Activated T-helper 2 cell treated with anti-CD3 and anti-CD28 coated beads, Interferon-gamma antibody, Interleukin-2, Interleukin-4, amounts not matched to agents 10 μg/mL and 5 μg/mL and 100 μg/mL, durations not matched to agents 14 hours and 24 hours and 36 hours (primary cell): ENCODE measurements at regions of chr2 and their contacts with region 1.

Region 1: DNA sequence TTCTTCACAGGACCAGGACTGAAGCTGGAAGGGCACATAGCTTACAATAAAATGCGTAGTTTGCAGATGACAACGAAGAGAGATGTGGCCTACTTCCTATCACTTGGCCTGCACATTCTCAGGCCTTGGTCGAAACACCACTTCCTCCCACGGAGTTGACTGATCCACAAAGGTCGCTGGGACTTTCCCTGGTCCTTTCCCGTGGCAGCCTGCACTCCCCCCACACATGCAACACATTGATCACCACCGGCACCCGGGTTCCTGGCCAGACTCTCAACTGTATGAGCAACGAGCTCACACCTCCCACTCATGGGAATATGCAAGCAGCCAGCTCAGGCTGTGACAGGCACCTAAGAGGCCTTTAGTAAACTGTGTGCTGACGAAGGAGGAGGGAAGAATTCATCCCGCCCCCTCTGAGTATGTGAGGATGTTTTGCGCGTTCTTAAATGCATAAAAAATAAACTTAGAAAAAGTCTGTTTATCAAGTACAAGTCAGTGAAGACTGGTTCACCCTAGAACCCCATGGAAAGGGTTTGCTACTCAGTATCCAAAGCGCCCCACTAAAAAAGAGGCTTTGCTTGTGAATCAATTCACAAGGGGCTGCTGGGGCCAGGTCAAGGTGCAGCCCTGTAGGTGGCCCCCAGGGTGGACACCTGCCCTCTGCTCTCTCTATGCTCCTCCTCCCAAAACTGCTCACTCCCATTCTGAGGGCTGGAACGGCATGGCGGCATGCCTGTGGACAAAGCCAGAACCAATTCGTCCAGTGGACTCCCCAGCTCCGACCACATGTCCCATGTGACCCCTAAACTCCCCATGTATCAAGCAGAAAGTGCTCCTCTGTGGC is 154.3 kb downstream of the EIPR1 start:
- DNase-seq: peak; percentile 58
- H3K4me3 Mint-ChIP-seq: peak overlapping the region; percentile 24
- H3K27ac Mint-ChIP-seq: peak overlapping the region; percentile 99
- H3K4me1 Mint-ChIP-seq: peaks cover 45% of the 10 kb centered on the region
- H3K27me3 Mint-ChIP-seq: no peaks in the 10 kb centered on the region

Region 2: DNA sequence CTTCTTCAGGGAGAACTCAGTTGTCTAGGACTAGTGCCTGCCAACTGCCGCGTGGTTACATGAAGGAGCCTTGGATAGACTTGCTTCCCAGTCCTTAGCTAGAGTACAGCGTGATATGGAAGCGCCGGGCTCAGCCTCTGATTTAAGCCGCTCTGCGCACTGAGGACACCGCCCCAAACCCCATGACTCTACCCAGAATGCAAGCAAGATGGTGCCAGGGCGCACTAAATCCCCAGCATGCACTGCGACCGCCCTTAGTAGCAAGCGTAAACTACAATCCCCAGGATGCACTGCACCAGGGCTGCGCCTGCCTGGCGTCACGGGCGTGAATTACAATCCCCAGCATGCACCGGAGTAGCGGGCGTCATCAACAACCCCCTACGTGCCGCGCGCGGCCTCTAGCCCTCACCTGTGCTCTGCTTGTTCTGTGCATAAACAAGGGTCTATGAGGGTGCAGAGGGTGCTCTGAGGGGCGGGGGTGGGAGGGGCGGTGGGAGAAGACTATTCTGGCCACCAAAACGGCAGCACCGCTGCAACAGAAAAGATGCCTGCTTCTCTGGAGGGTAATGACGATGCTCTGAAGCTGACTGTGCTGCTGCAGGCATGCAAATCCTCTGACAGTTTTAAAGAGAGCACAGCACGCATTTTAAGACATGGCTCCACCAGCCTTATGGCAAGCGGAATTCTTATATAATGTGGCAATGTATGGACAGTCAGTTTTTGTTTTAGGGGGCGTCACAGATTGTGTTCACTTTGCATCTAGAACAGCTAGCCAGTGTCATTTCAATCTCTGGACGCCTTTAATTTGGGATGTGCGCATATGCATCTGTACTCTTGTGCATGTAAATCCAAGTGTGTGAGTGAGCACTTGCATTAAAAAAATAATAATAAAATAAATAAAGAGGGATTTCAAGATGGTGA is 609.8 kb before region 1 on chr2:
- intact Hi-C with region 1: loop called (anchors 1 kb)
- DNase-seq: peak; percentile 87
- H3K4me3 Mint-ChIP-seq: peak overlapping the region; percentile 75
- H3K27ac Mint-ChIP-seq: peak overlapping the region; percentile 73
- H3K4me1 Mint-ChIP-seq: peaks cover 7% of the 10 kb centered on the region
- H3K27me3 Mint-ChIP-seq: peaks cover 14% of the 10 kb centered on the region

Region 3: GRCh38 chr2:2950403-2950952 is 272.8 kb before region 1 on chr2:
- intact Hi-C with region 1: no loop called
- DNase-seq: no peak
- H3K4me3 Mint-ChIP-seq: no peak overlapping the region
- H3K27ac Mint-ChIP-seq: no peak overlapping the region
- H3K4me1 Mint-ChIP-seq: no peaks in the 10 kb centered on the region
- H3K27me3 Mint-ChIP-seq: no peaks in the 10 kb centered on the region

Region 4: GRCh38 chr2:3179208-3179607 is 44.1 kb before region 1 on chr2:
- intact Hi-C with region 1: no loop called
- DNase-seq: no peak
- H3K4me3 Mint-ChIP-seq: no peak overlapping the region
- H3K27ac Mint-ChIP-seq: no peak overlapping the region
- H3K4me1 Mint-ChIP-seq: no peaks in the 10 kb centered on the region
- H3K27me3 Mint-ChIP-seq: no peaks in the 10 kb centered on the region

Region 5: DNA sequence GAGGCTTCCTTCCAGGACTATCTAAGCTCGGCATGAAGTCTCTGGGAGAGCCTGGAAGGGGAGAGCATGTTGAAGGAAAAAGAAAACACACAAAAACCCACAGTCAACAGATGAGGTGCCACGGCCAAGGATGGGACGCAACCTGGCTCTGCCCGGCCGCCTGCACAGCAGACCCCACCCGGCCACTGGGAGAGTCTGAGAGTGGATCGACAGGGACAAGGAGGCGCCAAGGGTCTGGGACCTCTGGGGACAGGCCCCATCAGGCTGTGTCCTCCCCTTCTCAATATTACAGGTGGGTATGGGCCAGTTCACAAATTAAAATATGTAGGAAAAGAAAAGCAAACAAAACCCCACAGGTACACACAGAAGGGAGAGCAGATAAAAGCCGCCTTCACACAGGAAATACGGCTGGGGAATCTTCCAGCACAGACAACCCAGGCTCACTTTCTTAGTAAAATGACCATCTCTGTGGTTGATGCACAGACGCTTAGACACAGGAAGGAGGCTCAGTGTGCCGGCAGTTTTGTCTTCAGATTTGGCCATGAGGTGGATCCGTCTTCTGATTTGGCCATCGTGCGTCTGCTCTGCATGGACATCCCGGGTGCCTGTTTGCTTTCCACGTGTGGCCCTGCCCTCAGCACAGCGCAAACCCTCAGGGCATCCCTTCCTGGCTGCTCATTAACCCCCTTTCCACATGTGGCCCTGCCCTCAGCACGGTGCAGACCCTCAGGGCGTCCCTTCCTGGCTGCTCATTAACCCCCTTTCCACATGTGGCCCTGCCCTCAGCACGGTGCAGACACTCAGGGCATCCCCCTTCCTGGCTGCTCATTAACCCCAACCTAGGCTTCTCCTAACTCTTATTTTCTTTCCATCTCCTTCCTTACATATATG is 15.9 kb after region 1 on chr2:
- intact Hi-C with region 1: loop called (anchors 1 kb)
- DNase-seq: no peak
- H3K4me3 Mint-ChIP-seq: no peak overlapping the region
- H3K27ac Mint-ChIP-seq: no peak overlapping the region
- H3K4me1 Mint-ChIP-seq: peaks cover 31% of the 10 kb centered on the region
- H3K27me3 Mint-ChIP-seq: no peaks in the 10 kb centered on the region

Region 6: DNA sequence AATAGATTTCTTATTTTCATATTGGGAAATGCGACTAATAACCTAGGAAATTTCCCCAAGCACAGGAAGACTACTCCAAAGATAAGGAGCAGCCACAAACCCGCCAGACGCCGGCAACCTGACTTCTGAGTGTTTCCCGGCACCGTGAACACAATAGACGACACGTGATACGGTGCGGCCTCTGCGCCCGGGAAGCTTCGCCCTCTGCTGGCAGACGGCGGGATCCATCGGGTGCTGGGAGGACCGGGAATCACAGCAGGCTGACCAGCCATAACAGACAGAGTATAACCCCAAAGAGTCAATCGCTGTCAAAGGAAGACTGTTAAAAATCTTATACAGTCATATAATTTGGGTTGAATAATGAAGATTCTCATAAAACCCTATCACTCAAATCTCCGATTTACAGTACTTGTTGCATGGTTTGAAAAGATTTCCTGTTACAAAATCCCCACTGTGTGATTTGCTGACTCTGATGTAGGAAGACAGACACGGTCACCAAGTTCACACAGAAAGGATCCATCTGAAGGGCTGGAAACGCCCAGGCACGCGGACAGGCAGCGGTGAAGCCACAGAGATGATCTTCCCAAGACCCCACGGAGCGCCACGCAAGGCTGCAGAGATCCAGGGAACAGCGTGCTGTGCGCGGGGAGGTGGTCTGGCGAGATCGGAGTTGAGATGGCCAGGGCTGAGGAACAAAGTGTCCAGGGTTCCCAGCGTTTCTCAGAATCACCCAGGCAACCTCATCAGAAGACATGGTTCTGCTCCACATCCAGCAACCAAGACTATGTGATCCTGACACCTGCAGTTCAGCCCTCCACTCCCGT is 80.5 kb after region 1 on chr2:
- intact Hi-C with region 1: loop called (anchors 1 kb)
- DNase-seq: peak; percentile 56
- H3K4me3 Mint-ChIP-seq: no peak overlapping the region
- H3K27ac Mint-ChIP-seq: peak overlapping the region; percentile 52
- H3K4me1 Mint-ChIP-seq: peaks cover 9% of the 10 kb centered on the region
- H3K27me3 Mint-ChIP-seq: no peaks in the 10 kb centered on the region

Region 7: GRCh38 chr2:3518496-3519254 is 295.4 kb after region 1 on chr2:
- intact Hi-C with region 1: loop called (anchors 5 kb)
- DNase-seq: peak; percentile 98
- H3K4me3 Mint-ChIP-seq: peak overlapping the region; percentile 91
- H3K27ac Mint-ChIP-seq: peak overlapping the region; percentile 78
- H3K4me1 Mint-ChIP-seq: peaks cover 31% of the 10 kb centered on the region
- H3K27me3 Mint-ChIP-seq: no peaks in the 10 kb centered on the region

Region 8: DNA sequence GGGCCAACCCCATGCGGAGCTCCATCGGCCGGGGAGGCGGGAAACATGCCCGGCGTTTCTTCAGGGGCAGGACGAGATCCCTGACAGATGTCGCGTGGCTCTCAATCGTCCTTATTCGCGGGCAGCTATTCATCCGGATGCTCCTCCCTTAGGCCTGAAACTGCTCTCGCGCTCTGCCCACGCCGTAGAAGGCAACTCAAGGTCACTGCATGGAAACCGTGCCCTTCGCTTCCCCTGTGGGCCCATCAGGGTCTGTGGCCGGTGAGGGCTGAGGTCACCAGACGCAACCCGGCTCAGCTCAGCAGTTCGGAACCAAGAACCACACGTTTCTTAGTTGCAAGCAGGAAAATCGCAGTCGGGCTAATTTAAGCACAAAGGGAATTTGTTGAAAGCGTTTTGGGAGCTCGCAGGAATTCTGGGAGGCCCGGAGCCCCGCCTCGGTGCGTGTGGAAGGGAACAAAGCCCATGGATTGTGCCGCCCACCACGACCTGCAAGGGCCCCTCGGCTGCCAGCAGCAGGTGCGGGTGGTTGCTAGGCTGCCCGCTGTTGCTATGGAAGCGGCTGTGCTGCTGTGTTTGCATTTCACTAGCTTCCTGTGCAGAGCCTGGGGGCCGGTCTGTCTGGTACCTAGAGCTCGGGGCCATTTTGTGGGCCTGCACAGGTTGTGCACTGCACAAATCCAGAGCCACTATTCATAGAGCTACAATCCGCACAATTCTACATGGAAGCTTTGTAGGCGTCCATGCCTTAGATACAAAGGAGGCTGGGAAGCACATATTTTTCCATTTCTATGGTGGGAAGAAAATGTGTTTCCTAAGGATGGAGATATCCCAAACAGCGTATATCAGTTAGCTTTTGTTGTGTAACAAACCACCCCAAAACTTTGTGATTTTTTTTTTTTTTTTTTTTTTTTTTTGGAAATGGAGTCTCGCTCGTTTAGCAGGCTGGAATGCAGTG is 428.7 kb after region 1 on chr2:
- intact Hi-C with region 1: loop called (anchors 2 kb)
- DNase-seq: peak; percentile 66
- H3K4me3 Mint-ChIP-seq: peak overlapping the region; percentile 80
- H3K27ac Mint-ChIP-seq: peak overlapping the region; percentile 94
- H3K4me1 Mint-ChIP-seq: peaks cover 14% of the 10 kb centered on the region
- H3K27me3 Mint-ChIP-seq: no peaks in the 10 kb centered on the region